H1 (cell line): ENCODE measurements at regions of chr9 and their contacts with region 1.

Region 1: GRCh38 chr9:14846871-14847311 is 63.3 kb downstream of the FREM1 start:
- DNase-seq: peak; percentile 54 to 93
- H3K4me3 ChIP-seq: no peak overlapping the region
- H3K27ac ChIP-seq: no peak overlapping the region
- H3K4me1 ChIP-seq: 0 out of 7 replicates have a peak, but pooled peaks cover 0 to 3% (median 0%) of the 10 kb centered on the region in 4 experiments
- H3K27me3 ChIP-seq: no peaks in the 10 kb centered on the region
- CTCF ChIP-seq: peak; percentile 93 to 97 (median 93)
- EP300 ChIP-seq: no peak
- POLR2A ChIP-seq: no peak
- RAD21 ChIP-seq: peak; percentile 81 to 86

Region 2: DNA sequence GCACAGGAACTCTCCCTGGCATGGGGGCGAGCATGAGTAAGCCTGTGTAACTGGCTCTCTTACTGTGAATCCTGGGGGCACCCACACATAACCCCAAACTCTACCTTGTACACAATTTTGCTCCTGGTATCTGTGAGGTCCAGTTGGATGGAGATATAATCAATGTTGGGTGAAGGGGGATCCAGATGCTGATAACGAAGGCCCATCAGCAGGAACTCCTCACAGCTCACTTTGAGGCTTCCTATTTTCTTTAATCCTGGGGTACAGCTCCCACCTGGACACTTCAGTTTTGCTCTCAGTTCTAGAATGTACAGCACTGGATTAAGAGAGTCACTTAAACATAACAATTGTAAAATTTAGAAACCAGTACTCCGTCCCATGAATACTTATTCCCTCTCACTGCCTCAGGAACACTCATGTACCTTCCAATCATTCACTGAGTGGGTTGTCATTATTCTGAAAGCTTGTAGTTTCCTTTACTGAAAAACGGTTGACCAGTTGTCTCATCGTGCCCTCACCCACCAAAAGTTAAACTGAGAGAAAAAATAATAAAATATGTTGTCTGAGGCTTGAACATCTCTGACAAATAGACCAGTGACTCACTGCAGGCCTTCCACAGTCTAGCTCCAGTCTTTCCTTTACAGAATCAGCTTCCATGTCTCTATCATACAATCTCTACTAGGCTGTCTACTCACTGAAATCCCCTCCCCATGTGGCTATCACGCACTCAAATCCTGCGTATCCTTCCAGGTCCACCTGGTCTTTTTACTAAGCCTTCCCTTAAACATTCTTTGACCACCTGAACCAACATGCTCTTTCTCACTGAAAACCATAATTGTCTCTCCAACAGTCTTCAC is 10.8 kb after region 1 on chr9:
- CTCF ChIA-PET with region 1: interaction called, 15 read pairs
- POLR2A ChIA-PET with region 1: no interaction called
- DNase-seq: no peak
- H3K4me3 ChIP-seq: no peak overlapping the region
- H3K27ac ChIP-seq: no peak overlapping the region
- H3K4me1 ChIP-seq: no peaks in the 10 kb centered on the region
- H3K27me3 ChIP-seq: no peaks in the 10 kb centered on the region
- CTCF ChIP-seq: no peak
- EP300 ChIP-seq: no peak
- POLR2A ChIP-seq: no peak
- RAD21 ChIP-seq: no peak